ENCODE measurements at regions of chr9 and their contacts with region 1.

Region 1: GRCh38 chr9:36470643-36471290 is 70.7 kb upstream of the RNF38 start:
- DNase-seq: peak in 1 of 2 experiments; percentile 35
- H3K4me3 ChIP-seq: peak overlapping the region; percentile 39; the same call in 1 of the 2 replicates
- H3K27ac ChIP-seq: 0 out of 2 replicates have a peak overlapping the region, but pooled peaks have one; percentile 29
- H3K4me1 ChIP-seq: no peaks in the 10 kb centered on the region
- H3K27me3 ChIP-seq: no peaks in the 10 kb centered on the region
- CTCF ChIP-seq: no peak

Region 2: DNA sequence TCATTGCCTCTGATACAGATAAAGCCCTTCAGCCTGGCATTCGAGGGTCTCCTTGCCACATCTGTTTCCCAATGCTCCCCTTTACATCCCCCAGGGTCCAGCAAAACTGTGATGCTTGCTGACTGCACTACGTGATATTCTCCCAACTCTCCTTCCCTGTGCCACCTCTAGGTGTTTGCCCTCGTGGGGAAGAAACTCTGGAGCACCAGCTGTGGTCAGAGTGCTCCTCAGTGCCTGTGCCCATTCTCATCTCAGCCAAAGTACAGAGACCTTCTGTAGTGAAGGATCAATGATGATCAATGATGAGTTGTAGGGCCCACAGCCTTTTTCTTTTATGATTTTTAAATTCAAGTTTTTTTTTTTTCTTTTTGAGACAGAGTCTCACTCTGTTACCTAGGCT is 61.6 kb after region 1 on chr9:
- CTCF ChIA-PET with region 1: no interaction called
- POLR2A ChIA-PET with region 1: no interaction called
- intact Hi-C with region 1: no loop called
- DNase-seq: no peak
- H3K4me3 ChIP-seq: no peak overlapping the region
- H3K27ac ChIP-seq: no peak overlapping the region
- H3K4me1 ChIP-seq: no peaks in the 10 kb centered on the region
- H3K27me3 ChIP-seq: no peaks in the 10 kb centered on the region
- CTCF ChIP-seq: no peak

Region 3: GRCh38 chr9:36612946-36613345 is 142.2 kb after region 1 on chr9:
- CTCF ChIA-PET with region 1: no interaction called
- POLR2A ChIA-PET with region 1: interaction called, 11 read pairs
- intact Hi-C with region 1: no loop called
- DNase-seq: no peak
- H3K4me3 ChIP-seq: no peak overlapping the region
- H3K27ac ChIP-seq: no peak overlapping the region
- H3K4me1 ChIP-seq: no peaks in the 10 kb centered on the region
- H3K27me3 ChIP-seq: no peaks in the 10 kb centered on the region
- CTCF ChIP-seq: no peak

Region 4: GRCh38 chr9:36632892-36633291 is 162.1 kb after region 1 on chr9:
- CTCF ChIA-PET with region 1: no interaction called
- POLR2A ChIA-PET with region 1: no interaction called
- intact Hi-C with region 1: no loop called
- DNase-seq: no peak
- H3K4me3 ChIP-seq: no peak overlapping the region
- H3K27ac ChIP-seq: no peak overlapping the region
- H3K4me1 ChIP-seq: no peaks in the 10 kb centered on the region
- H3K27me3 ChIP-seq: no peaks in the 10 kb centered on the region
- CTCF ChIP-seq: peak; percentile 70